ENCODE measurements at regions of chr1 and their contacts with region 1.

Region 1: DNA sequence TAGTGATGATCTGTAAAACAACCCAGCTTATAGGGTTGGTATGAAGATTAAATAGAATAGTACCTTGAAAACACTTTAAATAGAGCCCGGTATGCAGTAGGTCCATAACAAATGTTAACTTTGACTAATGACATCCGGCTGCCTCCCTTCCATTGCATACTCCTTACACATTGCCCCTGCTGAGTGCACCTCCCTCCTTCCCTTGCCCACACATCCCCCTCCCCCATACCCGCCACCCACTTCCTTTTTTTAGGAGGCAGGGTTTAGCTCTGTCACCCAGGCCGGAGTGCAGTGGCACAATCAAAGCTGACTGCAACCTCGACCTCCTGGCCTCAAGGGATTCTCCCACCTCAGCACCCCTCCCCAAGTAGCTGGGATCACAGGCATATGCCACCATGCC is 24.4 kb upstream of the ZC3H12A start:
- DNase-seq: peak; percentile 66
- H3K4me3 Mint-ChIP-seq: no peak overlapping the region
- H3K27ac Mint-ChIP-seq: no peak overlapping the region
- H3K4me1 Mint-ChIP-seq: peaks cover 13% of the 10 kb centered on the region
- H3K27me3 Mint-ChIP-seq: peaks cover 6% of the 10 kb centered on the region

Region 2: GRCh38 chr1:37498872-37499617 is 49.1 kb after region 1 on chr1:
- CTCF ChIA-PET with region 1: interaction called, 11 read pairs
- intact Hi-C with region 1: no loop called
- DNase-seq: no peak
- H3K4me3 Mint-ChIP-seq: no peak overlapping the region
- H3K27ac Mint-ChIP-seq: no peak overlapping the region
- H3K4me1 Mint-ChIP-seq: peaks cover 12% of the 10 kb centered on the region
- H3K27me3 Mint-ChIP-seq: no peaks in the 10 kb centered on the region

Region 3: GRCh38 chr1:37553927-37554808 is 104.2 kb after region 1 on chr1 and contains the start of gene SNIP1:
- CTCF ChIA-PET with region 1: interaction called, 3 read pairs
- intact Hi-C with region 1: loop called (anchors 2 kb)
- DNase-seq: peak; percentile 95
- H3K4me3 Mint-ChIP-seq: peak within 1 kb of the TSS; percentile 91
- H3K27ac Mint-ChIP-seq: peak within 1 kb of the TSS; percentile 86
- H3K4me1 Mint-ChIP-seq: peaks cover 44% of the 10 kb centered on the region
- H3K27me3 Mint-ChIP-seq: no peaks in the 10 kb centered on the region
- total RNA-seq, gene SNIP1: 14.3 to 15.3 TPM

Region 4: DNA sequence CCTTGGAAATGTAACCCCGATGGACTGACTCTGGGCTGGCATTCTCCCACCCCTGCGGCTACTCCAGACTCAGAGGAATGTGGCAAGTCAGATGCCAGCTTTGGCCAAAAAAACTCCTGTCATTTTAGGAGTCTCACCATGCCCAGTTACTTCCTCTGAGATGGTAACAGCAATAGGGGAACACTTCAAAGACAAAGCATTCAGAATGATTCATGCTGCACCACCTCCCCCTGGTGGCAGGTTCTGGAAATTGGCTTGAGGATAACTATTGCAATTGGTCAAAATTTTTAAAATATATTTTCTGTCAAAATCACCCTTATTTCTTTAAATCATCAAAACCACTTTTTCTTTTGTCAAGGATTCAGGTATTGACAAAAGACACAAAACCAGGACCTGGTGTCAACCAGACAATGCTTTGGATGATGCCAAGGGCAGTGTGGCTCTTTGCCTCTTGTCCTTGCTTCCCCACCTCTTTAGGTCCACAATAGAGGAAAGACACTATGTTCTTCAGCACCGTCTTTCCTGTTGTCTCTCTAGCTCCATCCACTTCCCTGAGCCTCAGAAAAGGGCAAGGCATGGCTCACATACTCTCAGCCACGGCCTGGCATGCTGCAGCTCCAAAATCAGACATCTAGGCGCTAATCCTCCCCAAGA is 232.5 kb after region 1 on chr1:
- CTCF ChIA-PET with region 1: interaction called, 4 read pairs
- intact Hi-C with region 1: loop called (anchors 1 kb)
- DNase-seq: peak; percentile 91
- H3K4me3 Mint-ChIP-seq: no peak overlapping the region
- H3K27ac Mint-ChIP-seq: no peak overlapping the region
- H3K4me1 Mint-ChIP-seq: peaks cover 3% of the 10 kb centered on the region
- H3K27me3 Mint-ChIP-seq: no peaks in the 10 kb centered on the region